ENCODE measurements at regions of chr11 and their contacts with region 1.

Region 1: GRCh38 chr11:124415356-124415923 is 9.2 kb downstream of the OR8B4 start:
- DNase-seq: peak; percentile 41
- H3K4me3 ChIP-seq: no peak overlapping the region
- H3K27ac ChIP-seq: no peak overlapping the region
- H3K27me3 ChIP-seq: peaks cover 9% of the 10 kb centered on the region
- CTCF ChIP-seq: peak; percentile 81

Region 2: GRCh38 chr11:123020968-123021367 is 1394.5 kb before region 1 on chr11:
- CTCF ChIA-PET with region 1: interaction called, 12 read pairs
- POLR2A ChIA-PET with region 1: no interaction called
- DNase-seq: peak; percentile 29
- H3K4me3 ChIP-seq: no peak overlapping the region
- H3K27ac ChIP-seq: no peak overlapping the region
- H3K27me3 ChIP-seq: peaks cover 25% of the 10 kb centered on the region
- CTCF ChIP-seq: peak; percentile 74

Region 3: DNA sequence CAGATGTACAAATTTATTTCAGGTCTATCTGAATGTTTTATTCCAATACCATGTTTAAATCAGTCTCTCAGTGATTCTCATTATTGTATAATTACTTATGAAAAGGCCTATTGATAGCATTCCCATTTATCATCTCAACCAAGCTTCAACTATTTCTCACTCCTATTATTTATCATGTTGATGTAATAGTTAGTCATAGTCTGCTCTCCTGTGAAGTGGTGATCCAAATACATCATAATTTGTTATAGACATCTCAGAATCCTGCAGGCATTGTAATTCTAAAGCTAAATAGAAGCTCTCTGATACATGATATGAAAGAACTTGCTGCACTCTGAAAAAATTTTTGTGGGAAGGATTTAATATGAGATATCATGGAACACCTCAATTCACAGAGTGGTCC is 196.3 kb before region 1 on chr11:
- CTCF ChIA-PET with region 1: no interaction called
- POLR2A ChIA-PET with region 1: no interaction called
- DNase-seq: no peak
- H3K4me3 ChIP-seq: no peak overlapping the region
- H3K27ac ChIP-seq: no peak overlapping the region
- H3K27me3 ChIP-seq: no peaks in the 10 kb centered on the region
- CTCF ChIP-seq: no peak

Region 4: DNA sequence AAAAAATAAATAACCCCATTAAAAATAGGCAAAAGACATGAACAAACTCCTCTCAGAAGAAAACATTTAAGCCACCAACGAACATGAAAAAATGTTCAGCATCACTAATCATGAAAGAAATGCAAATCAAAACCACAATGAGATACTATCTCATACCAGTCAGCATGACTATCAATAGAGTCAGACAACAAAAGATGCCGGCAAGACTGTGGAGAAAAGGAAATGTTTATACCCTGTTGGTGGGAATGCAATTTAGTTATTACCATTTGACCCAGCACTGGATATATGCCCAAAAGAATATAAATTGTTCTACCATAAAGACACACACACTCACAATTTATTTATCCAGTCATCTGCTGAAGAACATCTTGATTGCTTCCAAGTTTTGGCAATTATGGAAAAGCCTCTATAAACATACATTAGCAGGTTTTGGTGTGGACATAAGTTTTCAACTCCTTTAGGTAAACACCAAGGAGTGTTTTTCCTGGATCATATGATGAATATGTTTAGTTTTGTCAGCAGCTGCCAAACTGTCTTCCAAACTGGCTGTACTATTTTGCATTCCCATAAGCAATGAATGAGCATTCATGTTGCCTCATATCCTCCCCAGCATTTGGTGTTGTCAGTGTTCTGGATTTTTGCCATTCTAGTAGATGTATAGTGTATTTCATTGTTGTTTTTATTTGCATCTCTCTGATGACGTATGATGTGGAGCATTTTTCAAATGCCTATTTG is 129.7 kb before region 1 on chr11:
- CTCF ChIA-PET with region 1: no interaction called
- POLR2A ChIA-PET with region 1: no interaction called
- DNase-seq: peak; percentile 59
- H3K4me3 ChIP-seq: no peak overlapping the region
- H3K27ac ChIP-seq: no peak overlapping the region
- H3K27me3 ChIP-seq: no peaks in the 10 kb centered on the region
- CTCF ChIP-seq: no peak

Region 5: DNA sequence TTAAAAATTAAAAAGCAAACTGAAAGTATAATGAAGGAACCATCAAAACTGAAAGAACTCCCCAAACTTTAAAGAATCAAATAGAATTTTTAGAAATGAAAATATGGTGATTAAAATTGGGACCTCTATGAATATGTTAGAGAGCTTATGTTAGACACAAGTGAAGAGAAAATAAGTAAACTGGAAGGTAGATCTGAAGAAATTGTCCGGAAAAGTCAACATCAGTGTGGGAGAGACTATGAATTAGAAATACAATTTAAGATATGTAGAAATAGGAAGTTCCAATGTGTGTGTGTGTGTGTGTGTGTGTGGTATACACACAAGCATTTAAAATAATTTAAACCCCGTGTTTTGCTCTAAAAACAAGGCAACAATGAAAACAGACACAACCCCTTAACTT is 14.2 kb after region 1 on chr11:
- CTCF ChIA-PET with region 1: interaction called, 20 read pairs
- POLR2A ChIA-PET with region 1: no interaction called
- DNase-seq: no peak
- H3K4me3 ChIP-seq: no peak overlapping the region
- H3K27ac ChIP-seq: no peak overlapping the region
- H3K27me3 ChIP-seq: no peaks in the 10 kb centered on the region
- CTCF ChIP-seq: no peak

Region 6: GRCh38 chr11:124577716-124578427 is 162.4 kb after region 1 on chr11:
- CTCF ChIA-PET with region 1: interaction called, 117 read pairs
- POLR2A ChIA-PET with region 1: no interaction called
- DNase-seq: no peak
- H3K4me3 ChIP-seq: no peak overlapping the region
- H3K27ac ChIP-seq: no peak overlapping the region
- H3K27me3 ChIP-seq: peaks cover 9% of the 10 kb centered on the region
- CTCF ChIP-seq: no peak

Region 7: DNA sequence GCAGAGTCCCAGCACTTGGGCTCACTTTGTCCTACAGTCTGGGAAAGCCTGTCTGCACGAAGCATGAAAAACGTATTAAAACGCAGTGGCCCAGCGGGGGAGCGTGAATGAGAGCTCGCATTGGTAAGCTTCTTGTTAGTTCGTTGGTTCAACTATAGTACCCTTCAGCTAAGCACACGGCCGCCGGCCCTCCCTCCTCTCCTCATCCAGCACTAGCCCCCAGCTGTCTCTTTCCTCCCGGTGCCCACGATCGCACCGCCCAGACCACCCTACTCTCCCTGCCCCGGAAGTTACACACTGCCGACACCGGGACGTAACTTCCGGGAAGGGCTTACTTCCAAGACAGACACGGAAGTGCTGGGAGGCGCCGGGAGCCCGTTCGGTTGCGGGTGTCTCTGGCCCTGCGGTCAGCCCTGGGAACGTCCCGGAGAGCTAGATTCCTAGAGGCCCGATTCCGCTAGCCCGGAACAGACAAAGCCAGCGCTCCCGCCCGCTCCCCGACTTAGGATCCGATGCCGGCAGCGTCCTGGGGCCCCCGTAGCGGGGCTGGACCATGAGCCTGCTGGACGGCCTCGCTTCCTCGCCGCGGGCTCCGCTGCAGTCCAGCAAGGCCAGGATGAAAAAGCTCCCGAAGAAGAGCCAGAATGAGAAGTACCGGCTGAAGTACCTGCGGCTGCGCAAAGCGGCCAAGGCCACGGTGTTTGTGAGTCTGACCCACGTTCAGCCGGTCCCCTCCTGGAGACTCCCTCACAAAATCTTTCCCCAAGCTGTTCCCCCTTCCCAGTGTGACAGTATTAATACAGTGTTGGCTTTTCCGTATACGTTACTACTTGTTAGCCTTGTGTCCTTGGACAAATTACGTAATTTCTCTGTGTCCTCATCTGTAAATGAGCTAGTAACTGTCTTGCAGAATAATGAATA is 207.4 kb after region 1 on chr11 and contains the start of gene TBRG1:
- CTCF ChIA-PET with region 1: interaction called, 15 read pairs
- POLR2A ChIA-PET with region 1: no interaction called
- DNase-seq: peak; percentile 72
- H3K4me3 ChIP-seq: peak within 1 kb of the TSS; percentile 97
- H3K27ac ChIP-seq: peak within 1 kb of the TSS; percentile 94
- H3K27me3 ChIP-seq: peaks cover 12% of the 10 kb centered on the region
- CTCF ChIP-seq: no peak
- polyA plus RNA-seq, gene TBRG1: 30.9 and 31.4 TPM in 2 replicates

Region 8: DNA sequence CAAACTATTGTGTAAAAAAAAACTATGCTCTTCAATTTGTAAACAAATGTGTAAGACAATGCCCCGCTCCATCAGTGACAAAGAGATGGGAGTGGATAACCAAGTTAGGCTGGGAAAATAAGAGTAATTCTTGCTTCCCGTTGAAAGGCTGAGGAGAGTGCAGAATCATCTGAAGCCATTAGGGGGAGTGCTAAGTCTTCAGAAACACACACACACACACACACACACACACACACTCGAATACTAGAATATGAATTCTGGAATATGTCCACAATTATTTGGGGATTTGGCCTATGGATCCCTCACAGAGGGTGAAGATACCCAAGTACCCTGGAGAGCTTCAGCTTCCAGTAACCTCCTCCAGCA is 422.0 kb after region 1 on chr11:
- CTCF ChIA-PET with region 1: interaction called, 30 read pairs
- POLR2A ChIA-PET with region 1: no interaction called
- DNase-seq: peak; percentile 66
- H3K4me3 ChIP-seq: no peak overlapping the region
- H3K27ac ChIP-seq: no peak overlapping the region
- H3K27me3 ChIP-seq: peaks cover 44% of the 10 kb centered on the region
- CTCF ChIP-seq: peak; percentile 81